ENCODE measurements at regions of chr9 and their contacts with region 1.

Region 1: DNA sequence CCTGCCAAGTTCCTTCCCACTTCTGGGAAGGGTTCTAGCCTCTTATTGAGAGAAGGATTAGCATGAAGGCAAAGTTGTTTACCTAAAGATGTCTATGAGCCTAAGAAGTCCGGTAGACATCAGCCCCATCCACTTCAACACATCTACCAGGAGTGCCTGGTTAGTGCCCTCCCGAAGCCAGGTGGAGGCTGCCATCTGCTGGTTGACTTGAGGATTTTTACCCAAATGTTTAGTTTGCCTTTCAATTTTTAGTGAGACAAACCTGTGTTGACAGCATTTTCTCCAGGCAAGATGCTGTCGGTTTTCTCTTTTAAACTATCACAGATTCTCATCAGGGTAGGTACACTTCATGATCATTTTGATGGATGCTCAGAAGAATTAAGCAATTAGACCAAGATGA is 83.6 kb upstream of the TNFSF8 start:
- DNase-seq: peak; percentile 33 to 73 (median 68)
- ATAC-seq: peak; percentile 77 to 93 (median 88)
- H3K4me3 ChIP-seq: no peak overlapping the region
- H3K27ac ChIP-seq: no peak overlapping the region
- H3K4me1 ChIP-seq: no peaks in the 10 kb centered on the region
- H3K27me3 ChIP-seq: no peaks in the 10 kb centered on the region
- CTCF ChIP-seq: peak; percentile 51 to 66 (median 60)

Region 2: GRCh38 chr9:114405294-114406034 is 608.5 kb before region 1 on chr9:
- intact Hi-C with region 1: loop called in 1 of 3 experiments (anchors 10 kb)
- DNase-seq: peak; percentile 56 to 77 (median 66)
- ATAC-seq: peak; percentile 84 to 96 (median 94)
- H3K4me3 ChIP-seq: no peak overlapping the region
- H3K27ac ChIP-seq: no peak overlapping the region
- H3K4me1 ChIP-seq: no peaks in the 10 kb centered on the region
- H3K27me3 ChIP-seq: no peaks in the 10 kb centered on the region
- CTCF ChIP-seq: peak; percentile 41 to 79 (median 60)

Region 3: DNA sequence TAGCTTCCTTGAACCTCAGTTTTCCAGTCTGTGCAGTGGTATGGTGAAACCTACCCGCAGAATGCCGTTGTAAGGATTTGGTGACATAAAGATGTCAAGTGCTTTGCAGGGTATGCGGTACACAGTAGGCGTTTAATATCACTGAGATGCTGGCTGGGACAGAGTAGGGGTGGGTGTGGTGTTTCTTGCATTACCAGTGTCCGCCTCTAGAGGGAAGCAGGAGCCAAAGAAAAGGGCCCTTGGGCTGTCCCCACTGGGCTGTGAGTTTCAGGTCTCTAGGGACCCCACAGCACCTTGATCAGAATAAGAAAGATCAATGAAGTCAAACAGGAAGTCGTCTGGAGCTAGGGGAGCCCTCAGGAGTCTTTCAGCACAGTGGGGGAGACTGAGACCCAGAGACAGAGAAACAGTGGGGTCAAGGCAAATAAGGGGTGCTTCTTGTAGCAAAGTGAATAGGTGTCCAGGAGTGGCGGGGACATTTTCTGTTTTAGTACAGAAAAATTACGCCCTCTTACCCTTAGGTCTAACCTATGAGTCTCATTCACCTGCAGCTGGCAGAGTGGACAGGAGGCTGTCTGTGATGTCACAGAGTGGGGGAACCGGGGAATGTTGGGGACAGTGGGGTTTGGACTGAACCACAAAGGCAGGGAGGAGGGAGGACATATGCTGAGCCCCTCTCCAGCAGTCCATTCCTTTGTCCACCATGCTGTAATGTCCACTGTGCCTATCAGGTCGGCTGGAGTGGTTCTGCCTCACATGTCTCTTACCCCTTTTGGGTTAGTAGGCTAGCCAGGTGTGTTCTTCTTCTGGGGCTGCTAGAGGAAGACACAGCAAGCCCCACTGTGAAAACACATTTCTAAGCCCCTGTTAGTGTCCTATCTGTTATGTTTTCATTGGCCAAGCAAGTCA is 351.7 kb before region 1 on chr9:
- intact Hi-C with region 1: loop called in 2 of 3 experiments (anchors 10 kb)
- DNase-seq: peak in 5 of 6 donors; percentile 27 to 66 (median 33)
- ATAC-seq: peak; percentile 67 to 95 (median 88)
- H3K4me3 ChIP-seq: no peak overlapping the region
- H3K27ac ChIP-seq: no peak overlapping the region
- H3K4me1 ChIP-seq: no peaks in the 10 kb centered on the region
- H3K27me3 ChIP-seq: no peaks in the 10 kb centered on the region
- CTCF ChIP-seq: peak; percentile 57 to 79 (median 76)

Region 4: DNA sequence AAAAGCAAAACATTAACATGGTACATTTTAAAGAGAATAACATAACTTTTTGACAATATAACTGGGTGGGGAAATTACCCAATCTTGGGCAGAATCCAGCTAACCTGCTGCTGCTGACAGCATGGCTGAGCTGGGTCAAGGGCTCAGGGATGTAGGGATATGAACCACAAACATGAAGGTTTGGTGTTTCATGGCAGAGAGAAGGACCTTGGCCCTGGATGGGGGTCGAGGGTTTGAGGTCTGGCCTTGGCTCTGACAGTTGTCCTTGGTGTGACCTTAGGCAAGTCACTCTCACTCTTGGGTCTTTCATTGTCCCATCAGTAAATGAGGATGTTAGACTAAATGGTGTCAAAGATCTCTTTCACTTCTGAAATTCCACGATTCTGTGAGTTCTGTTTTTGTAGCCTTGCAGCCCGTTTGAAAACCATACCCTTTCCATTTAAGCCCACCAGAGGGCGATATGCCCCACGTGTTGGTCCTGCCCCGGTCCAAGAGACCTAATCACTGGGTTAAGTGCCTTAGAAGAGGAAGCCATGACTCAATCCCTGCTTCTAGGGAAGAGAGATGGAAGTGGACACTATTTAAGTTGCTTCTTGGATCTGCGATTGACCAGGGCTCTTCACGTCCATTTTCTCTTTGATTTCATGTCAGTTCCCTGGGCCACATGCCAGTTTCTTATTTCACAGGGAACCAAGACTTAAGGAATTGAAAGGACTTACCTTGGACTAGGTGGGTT is 275.2 kb before region 1 on chr9:
- intact Hi-C with region 1: loop called in 2 of 3 experiments (anchors 5 to 10 kb)
- DNase-seq: peak; percentile 43 to 70 (median 64)
- ATAC-seq: peak; percentile 90 to 100 (median 98)
- H3K4me3 ChIP-seq: no peak overlapping the region
- H3K27ac ChIP-seq: no peak overlapping the region
- H3K4me1 ChIP-seq: no peaks in the 10 kb centered on the region
- H3K27me3 ChIP-seq: peaks cover 0 to 3% (median 0%) of the 10 kb centered on the region in 4 donors
- CTCF ChIP-seq: peak; percentile 63 to 85 (median 78)

Region 5: GRCh38 chr9:114929201-114929600 is 84.8 kb before region 1 on chr9:
- intact Hi-C with region 1: no loop called
- DNase-seq: no peak
- ATAC-seq: peak in 1 of 4 donors; percentile 24
- H3K4me3 ChIP-seq: peak overlapping the region in 1 of 4 donors; percentile 4
- H3K27ac ChIP-seq: peak overlapping the region in 2 of 4 donors; percentile 0 to 51
- H3K4me1 ChIP-seq: no peaks in the 10 kb centered on the region
- H3K27me3 ChIP-seq: peaks cover 0 to 7% (median 0%) of the 10 kb centered on the region in 4 donors
- CTCF ChIP-seq: no peak

Region 6: DNA sequence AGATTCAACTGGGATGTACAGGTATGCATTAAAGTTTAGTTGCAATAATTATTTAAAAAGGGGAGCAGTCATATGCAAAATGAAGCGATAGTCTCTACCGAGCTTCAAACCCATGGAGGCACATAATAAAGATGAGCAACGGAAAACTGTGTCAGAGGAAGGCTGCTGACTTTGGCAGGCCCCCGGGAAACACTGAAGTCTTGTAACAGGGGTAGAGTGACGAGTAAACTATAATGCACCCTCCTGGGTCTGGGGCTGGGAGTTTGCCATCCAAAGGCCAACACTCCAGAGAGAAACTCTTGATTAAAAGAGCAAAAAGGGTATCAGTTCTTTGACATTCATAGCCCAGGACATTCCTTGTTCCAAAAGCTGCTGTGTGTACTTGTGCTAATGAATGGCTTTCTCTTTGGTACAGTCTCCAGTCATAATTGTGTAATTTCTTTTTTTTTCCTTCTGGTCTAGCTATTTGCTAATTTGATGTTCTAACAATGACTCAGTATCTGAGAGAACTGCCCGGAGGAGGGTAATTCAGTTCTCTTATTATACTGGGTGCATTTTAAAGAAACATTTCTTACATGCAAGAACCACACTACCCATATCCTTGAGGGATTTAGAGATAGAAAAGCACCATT is 44.8 kb after region 1 on chr9:
- intact Hi-C with region 1: no loop called
- DNase-seq: no peak
- ATAC-seq: peak in 2 of 4 donors; percentile 41 to 65
- H3K4me3 ChIP-seq: no peak overlapping the region
- H3K27ac ChIP-seq: no peak overlapping the region
- H3K4me1 ChIP-seq: no peaks in the 10 kb centered on the region
- H3K27me3 ChIP-seq: no peaks in the 10 kb centered on the region
- CTCF ChIP-seq: no peak

Measured in pancreas (tissue), 10 donors.